ENCODE measurements at regions of chr11 and their contacts with region 1.

Region 1: DNA sequence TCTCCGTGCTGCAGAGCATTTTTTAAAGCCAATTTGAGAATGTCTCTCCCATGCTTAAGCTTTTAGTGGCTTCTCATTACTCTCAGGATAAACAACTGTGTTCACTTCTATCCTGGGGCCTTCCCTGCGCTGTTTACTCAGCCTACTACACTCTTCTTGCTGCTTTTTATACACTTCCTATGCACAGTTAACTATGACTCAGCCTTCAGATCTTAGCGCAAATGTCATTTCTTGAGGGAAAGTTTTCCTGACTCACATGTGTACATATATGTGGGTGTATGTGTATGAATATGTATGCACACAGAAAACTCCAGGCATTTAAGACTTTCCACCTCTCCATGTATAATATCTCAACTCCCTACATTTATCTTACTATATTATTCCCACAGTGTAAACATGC is 9.8 kb downstream of the THAP12 start:
- H3K4me3 Mint-ChIP-seq: no peak overlapping the region
- H3K27ac Mint-ChIP-seq: peak overlapping the region; percentile 8
- H3K4me1 Mint-ChIP-seq: peaks cover 55% of the 10 kb centered on the region
- H3K27me3 Mint-ChIP-seq: no peaks in the 10 kb centered on the region

Region 2: GRCh38 chr11:76339221-76339620 is 31.9 kb before region 1 on chr11:
- intact Hi-C with region 1: loop called (anchors 5 kb)
- H3K4me3 Mint-ChIP-seq: no peak overlapping the region
- H3K27ac Mint-ChIP-seq: peak overlapping the region; percentile 94
- H3K4me1 Mint-ChIP-seq: peaks cover 49% of the 10 kb centered on the region
- H3K27me3 Mint-ChIP-seq: peaks cover 8% of the 10 kb centered on the region

Measured in dendritic cell treated with granulocyte-macrophage colony-stimulating factor and Interleukin-4, amounts not matched to agents 40 ng/mL and 50 ng/mL, for 4 days (primary cell).